Heart left ventricle (tissue), 16 donors: ENCODE measurements at regions of chr16 and their contacts with region 1.

Region 1: DNA sequence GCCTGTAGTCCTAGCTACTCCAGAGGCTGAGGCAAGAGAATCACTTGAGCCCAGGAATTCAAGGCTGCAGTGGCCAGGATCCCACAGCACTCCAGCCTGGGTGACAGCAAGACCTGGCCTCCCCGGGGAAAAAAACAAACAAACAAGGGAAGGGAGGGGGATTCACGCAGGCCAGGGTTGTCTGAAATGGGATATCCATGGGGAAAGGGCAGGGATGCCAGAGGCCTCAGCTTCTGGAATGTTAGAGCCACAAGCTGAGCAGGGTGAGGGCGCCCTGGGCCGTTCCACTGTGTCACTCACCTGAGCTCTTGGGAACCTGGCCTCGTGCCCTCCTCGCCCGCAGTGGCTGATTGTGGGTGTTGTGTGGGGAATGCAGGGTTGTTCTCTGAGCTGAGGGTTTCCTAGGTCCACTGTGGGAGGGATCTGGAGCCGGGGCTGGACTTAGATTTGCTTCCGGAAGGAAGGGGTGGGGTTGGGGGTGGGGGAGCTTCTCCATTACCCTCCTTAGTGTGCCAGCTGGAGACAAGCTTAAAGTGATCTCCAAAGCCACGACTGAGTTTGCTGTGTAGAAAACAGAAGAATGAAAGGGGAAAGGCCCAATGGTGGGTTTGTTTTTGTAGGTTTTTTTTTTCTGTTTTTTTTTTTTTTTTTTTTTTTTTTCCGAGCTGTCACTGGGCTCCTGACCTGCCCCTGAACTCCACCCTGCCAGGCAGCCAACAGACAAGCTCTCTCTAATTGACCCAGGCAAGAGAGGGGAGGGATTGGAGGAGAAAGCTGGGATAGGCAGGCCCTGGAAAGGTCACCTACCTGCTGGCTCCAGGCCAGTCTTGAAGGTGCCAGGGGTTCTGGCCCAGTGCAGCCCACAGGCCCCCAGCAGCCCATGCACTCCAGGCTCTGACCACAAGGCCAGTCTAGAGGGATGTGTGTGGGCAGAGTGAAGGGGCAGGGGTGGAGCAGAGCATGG is at the start of gene SULT1A1:
- DNase-seq: peak; percentile 60 to 77 (median 69)
- ATAC-seq: peak; percentile 49 to 86 (median 77)
- H3K4me3 ChIP-seq: peak within 1 kb of the TSS in 11 of 12 donors; percentile 17 to 59 (median 50)
- H3K27ac ChIP-seq: peak within 1 kb of the TSS in 11 of 12 donors; percentile 4 to 84 (median 64)
- H3K4me1 ChIP-seq: peaks cover 3 to 24% (median 14%) of the 10 kb centered on the region in 12 donors
- H3K27me3 ChIP-seq: no peaks in the 10 kb centered on the region
- CTCF ChIP-seq: no peak
- POLR2A ChIP-seq: no peak
- total RNA-seq, gene SULT1A1: 8.7 to 35.9 (median 20.6) TPM

Region 2: GRCh38 chr16:28317040-28317880 is 292.7 kb before region 1 on chr16:
- intact Hi-C with region 1: loop called in 1 of 10 experiments (anchors 10 kb)
- DNase-seq: peak; percentile 28 to 79 (median 44)
- ATAC-seq: peak in 3 of 4 donors; percentile 40 to 54 (median 52)
- H3K4me3 ChIP-seq: no peak overlapping the region
- H3K27ac ChIP-seq: no peak overlapping the region
- H3K4me1 ChIP-seq: peaks cover 0 to 7% (median 0%) of the 10 kb centered on the region in 12 donors
- H3K27me3 ChIP-seq: no peaks in the 10 kb centered on the region
- CTCF ChIP-seq: peak; percentile 65 to 87 (median 80)
- POLR2A ChIP-seq: no peak

Region 3: GRCh38 chr16:28481986-28482385 is 127.9 kb before region 1 on chr16:
- intact Hi-C with region 1: loop called in 1 of 10 experiments (anchors 10 kb)
- DNase-seq: no peak
- ATAC-seq: no peak
- H3K4me3 ChIP-seq: no peak overlapping the region
- H3K27ac ChIP-seq: no peak overlapping the region
- H3K4me1 ChIP-seq: no peaks in the 10 kb centered on the region
- H3K27me3 ChIP-seq: no peaks in the 10 kb centered on the region
- CTCF ChIP-seq: no peak
- POLR2A ChIP-seq: no peak

Region 4: GRCh38 chr16:28553776-28554633 is 55.9 kb before region 1 on chr16 and contains the start of gene SGF29:
- intact Hi-C with region 1: loop called in 2 of 10 experiments (anchors 5 to 10 kb)
- DNase-seq: peak; percentile 92 to 96 (median 94)
- ATAC-seq: peak; percentile 93 to 97 (median 96)
- H3K4me3 ChIP-seq: peak within 1 kb of the TSS; percentile 39 to 94 (median 70)
- H3K27ac ChIP-seq: peak within 1 kb of the TSS; percentile 93 to 100 (median 98)
- H3K4me1 ChIP-seq: peaks cover 0 to 37% (median 9%) of the 10 kb centered on the region in 12 donors
- H3K27me3 ChIP-seq: no peaks in the 10 kb centered on the region
- CTCF ChIP-seq: peak in 9 of 12 donors; percentile 19 to 64 (median 48)
- POLR2A ChIP-seq: peak in 1 of 2 donors; percentile 85
- total RNA-seq, gene SGF29: 11.1 to 27.9 (median 15.6) TPM

Region 5: DNA sequence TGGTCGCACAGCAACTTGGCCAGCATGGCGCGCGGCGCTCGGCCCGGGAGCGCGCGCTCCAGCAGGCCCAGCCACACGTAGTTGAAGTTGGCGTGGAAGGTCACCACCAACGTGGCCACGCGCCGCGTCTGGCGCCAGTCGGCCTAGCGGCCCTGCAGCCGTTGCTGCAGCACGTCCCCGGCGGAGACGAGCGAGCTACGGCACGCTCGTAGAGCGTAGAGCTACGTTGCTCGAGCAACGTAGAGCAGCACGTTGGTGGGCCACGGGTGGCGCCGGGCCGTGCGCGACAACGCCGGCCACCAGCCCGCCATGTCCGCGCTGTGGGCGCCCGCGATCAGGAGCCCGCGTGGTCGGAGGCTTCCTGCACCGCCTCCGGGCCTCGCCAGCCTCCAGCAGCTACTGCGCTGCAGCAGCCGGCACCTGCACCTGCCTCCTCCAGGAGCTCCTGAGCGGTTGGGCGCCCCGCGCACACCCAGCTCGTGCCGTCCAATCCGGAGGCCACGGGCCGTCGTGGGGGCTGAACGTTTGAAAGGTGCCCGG is 13.3 kb after region 1 on chr16:
- intact Hi-C with region 1: no loop called
- DNase-seq: peak in 3 of 5 donors; percentile 49 to 76 (median 51)
- ATAC-seq: peak; percentile 42 to 91 (median 84)
- H3K4me3 ChIP-seq: peak overlapping the region; percentile 19 to 64 (median 52)
- H3K27ac ChIP-seq: peak overlapping the region in 10 of 12 donors; percentile 32 to 68 (median 48)
- H3K4me1 ChIP-seq: peaks cover 0 to 12% (median 0%) of the 10 kb centered on the region in 12 donors
- H3K27me3 ChIP-seq: peaks cover 0 to 6% (median 0%) of the 10 kb centered on the region in 9 donors
- CTCF ChIP-seq: no peak
- POLR2A ChIP-seq: no peak